B cell (primary cell): ENCODE measurements at regions of chr1 and their contacts with region 1.

Region 1: GRCh38 chr1:921011-921837 is 2.5 kb upstream of the SAMD11 start:
- DNase-seq: peak; percentile 69
- ATAC-seq: peak; percentile 52
- H3K4me3 ChIP-seq: no peak overlapping the region
- H3K4me3 Mint-ChIP-seq: peak overlapping the region; percentile 62
- H3K27ac ChIP-seq: no peak overlapping the region
- H3K27ac Mint-ChIP-seq: no peak overlapping the region
- H3K4me1 ChIP-seq: peaks cover 35 to 48% of the 10 kb centered on the region in 2 donors
- H3K4me1 Mint-ChIP-seq: peaks cover 22% of the 10 kb centered on the region
- H3K27me3 ChIP-seq: peaks cover 0 to 80% (median 39%) of the 10 kb centered on the region in 4 experiments
- H3K27me3 Mint-ChIP-seq: peaks cover 44% of the 10 kb centered on the region
- CTCF ChIP-seq: peak; percentile 14

Region 2: DNA sequence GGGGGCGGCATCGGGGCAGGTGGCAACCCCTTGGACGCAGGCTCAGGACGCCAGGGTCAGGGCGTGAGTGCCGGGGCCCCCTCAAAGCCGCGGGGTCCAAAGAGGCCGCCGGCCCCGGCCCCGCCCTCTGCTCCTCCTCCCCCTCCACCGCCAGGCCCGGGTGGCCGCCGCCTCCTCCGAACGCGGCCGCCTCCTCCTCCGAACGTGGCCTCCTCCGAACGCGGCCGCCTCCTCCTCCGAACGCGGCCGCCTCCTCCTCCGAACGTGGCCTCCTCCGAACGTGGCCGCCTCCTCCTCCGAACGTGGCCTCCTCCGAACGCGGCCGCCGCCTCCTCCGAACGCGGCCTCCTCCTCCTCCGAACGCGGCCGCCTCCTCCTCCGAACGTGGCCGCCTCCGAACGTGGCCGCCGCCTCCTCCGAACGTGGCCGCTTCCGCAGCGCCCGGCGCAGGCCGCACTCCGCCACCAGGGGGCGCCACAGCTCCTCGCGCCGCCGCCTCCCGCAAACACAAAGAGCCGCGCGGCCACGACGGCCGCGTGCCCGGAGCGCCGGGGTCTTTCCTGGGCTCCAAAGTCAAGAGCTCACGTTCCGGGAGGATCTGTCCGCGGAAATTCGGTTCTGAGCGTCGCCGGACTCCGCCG is 16.8 kb before region 1 on chr1:
- CTCF ChIA-PET with region 1: interaction called, 3 read pairs
- POLR2A ChIA-PET with region 1: no interaction called
- intact Hi-C with region 1: loop called (anchors 2 kb)
- DNase-seq: peak; percentile 90
- ATAC-seq: peak; percentile 69
- H3K4me3 ChIP-seq: peak overlapping the region in 4 of 5 experiments; percentile 35 to 62 (median 46)
- H3K4me3 Mint-ChIP-seq: peak overlapping the region; percentile 73
- H3K27ac ChIP-seq: no peak overlapping the region
- H3K27ac Mint-ChIP-seq: no peak overlapping the region
- H3K4me1 ChIP-seq: peaks cover 22 to 30% of the 10 kb centered on the region in 2 donors
- H3K4me1 Mint-ChIP-seq: peaks cover 22% of the 10 kb centered on the region
- H3K27me3 ChIP-seq: peaks cover 0 to 48% (median 15%) of the 10 kb centered on the region in 4 experiments
- H3K27me3 Mint-ChIP-seq: peaks cover 42% of the 10 kb centered on the region
- CTCF ChIP-seq: peak; percentile 74

Region 3: DNA sequence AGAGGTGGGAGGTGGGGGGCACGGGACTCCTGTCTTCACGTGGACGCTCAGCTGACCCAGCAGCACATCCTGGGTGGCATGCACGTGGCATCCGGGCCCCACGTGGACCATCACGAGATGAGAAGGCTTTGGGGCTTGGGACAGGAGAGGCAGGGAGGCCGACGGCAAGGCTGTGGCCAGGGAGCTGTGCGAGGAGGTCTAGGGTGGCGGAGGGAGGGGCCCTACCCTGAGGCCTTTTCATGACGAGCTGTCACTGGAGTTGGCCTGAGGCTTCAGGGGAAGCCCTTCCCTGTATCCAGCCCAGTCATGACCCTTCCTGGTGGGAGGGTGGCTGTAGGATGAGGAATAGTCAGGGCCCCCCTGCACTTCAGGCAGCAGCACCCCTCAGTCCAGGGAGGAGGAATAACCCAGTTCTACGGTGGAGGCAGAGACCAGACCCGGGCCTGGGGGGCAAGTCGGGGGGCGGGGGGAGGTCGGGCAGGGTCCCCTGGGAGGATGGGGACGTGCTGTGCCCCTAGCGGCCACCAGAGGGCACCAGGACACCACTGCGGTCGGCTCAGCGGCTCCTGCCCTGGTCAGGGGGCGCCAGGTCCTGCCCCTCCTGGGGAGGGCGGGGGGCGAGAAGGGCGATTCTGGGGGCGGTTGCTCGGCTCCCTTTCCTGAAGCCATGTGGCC is 62.7 kb after region 1 on chr1:
- CTCF ChIA-PET with region 1: no interaction called
- POLR2A ChIA-PET with region 1: no interaction called
- intact Hi-C with region 1: no loop called
- DNase-seq: peak; percentile 73
- ATAC-seq: peak; percentile 95
- H3K4me3 ChIP-seq: no peak overlapping the region
- H3K4me3 Mint-ChIP-seq: no peak overlapping the region
- H3K27ac ChIP-seq: no peak overlapping the region
- H3K27ac Mint-ChIP-seq: no peak overlapping the region
- H3K4me1 ChIP-seq: peaks cover 0 to 3% of the 10 kb centered on the region in 2 donors
- H3K4me1 Mint-ChIP-seq: no peaks in the 10 kb centered on the region
- H3K27me3 ChIP-seq: peaks cover 0 to 22% (median 0%) of the 10 kb centered on the region in 4 experiments
- H3K27me3 Mint-ChIP-seq: peaks cover 38% of the 10 kb centered on the region
- CTCF ChIP-seq: peak; percentile 90

Region 4: DNA sequence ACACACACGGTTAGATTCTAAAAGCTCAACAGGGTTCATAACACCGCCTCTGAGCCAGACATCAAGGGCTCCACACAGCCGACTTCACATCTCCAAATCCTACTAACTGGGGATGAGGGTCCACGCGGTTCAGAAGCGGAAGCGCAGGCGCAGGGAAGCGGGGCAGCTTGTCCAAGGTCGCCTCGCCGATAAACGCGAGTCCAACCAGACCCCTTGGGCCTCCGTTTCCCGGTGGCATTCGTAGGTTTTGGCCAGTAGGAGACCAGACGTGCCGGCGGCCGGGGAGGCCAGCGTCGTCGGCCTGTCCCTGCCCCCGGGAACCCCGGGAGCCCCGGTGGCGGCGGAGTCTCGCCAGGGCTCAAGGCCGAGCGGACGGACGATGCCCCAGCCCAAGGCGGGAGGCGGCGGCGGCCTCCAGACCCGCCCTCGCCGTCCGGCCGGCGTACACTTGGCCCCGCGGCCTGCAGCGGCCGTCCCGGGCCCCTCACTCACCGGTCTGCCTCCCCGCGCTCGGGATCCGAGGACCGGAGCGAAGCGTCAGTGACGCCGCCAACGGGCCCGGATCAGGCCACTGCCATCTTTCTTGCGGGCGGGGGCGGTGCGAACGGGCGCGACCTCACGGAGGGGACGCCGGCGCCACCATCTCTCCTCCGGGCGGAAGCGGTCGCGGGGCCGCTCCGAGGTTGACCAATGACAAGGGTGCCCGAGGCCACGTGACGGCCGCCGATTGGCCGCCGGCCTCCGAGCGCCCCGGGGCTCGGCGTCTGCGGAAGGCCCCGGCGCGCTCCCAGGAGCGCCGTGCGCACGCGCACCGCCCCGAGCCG is 310.4 kb after region 1 on chr1 and contains the start of gene SDF4:
- CTCF ChIA-PET with region 1: no interaction called
- POLR2A ChIA-PET with region 1: no interaction called
- intact Hi-C with region 1: no loop called
- DNase-seq: peak; percentile 98
- ATAC-seq: peak; percentile 94
- H3K4me3 ChIP-seq: peak within 1 kb of the TSS; percentile 86 to 98 (median 90)
- H3K4me3 Mint-ChIP-seq: peak within 1 kb of the TSS; percentile 93
- H3K27ac ChIP-seq: peak within 1 kb of the TSS; percentile 29 to 91
- H3K27ac Mint-ChIP-seq: peak within 1 kb of the TSS; percentile 84
- H3K4me1 ChIP-seq: peaks cover 25 to 30% of the 10 kb centered on the region in 2 donors
- H3K4me1 Mint-ChIP-seq: peaks cover 33% of the 10 kb centered on the region
- H3K27me3 ChIP-seq: no peaks in the 10 kb centered on the region
- H3K27me3 Mint-ChIP-seq: no peaks in the 10 kb centered on the region
- CTCF ChIP-seq: no peak
- total RNA-seq, gene SDF4: 143 and 151 TPM in 2 replicates